CD8-positive, alpha-beta memory T cell (primary cell): ENCODE measurements at regions of chr4 and their contacts with region 1.

Region 1: DNA sequence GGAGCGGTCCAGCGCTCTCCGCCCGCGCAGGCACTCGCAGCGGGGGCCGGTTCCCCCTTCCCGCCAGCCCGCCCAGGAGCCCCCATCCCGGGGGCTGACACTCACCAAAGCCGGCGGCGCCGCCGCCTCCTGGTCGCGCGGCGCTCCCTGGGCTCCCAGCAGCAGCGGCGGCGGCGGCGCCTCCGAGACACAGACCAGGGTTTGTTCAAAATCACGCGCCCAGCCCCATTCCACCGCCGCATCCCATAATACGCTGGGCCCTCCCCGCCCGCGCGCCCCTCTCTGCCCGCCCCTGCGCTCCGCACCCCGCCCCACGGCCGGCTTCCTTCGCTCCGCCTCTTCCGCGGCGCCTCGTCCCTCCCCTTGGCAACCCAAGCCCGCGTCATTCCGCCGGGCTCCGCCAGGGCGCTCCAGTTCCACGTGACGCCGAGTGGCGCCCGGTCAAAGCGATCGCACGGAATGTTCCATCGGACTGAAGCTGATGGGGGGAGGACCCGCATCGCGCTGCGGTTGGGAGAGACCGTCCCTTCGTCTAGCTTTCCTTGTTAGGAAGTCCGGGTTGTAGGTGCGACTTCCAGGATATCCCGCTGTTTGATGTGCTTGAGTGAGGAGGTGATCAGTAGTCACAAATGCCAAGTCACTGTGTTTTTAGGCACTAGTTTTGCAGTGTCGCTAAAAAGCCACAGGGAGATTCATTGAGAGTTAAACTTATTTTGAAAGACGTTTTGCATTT is 2.2 kb upstream of the LIN54 start:
- DNase-seq: peak; percentile 95 to 97 (median 96)
- H3K4me3 ChIP-seq: peak overlapping the region; percentile 81
- H3K4me3 Mint-ChIP-seq: peak overlapping the region; percentile 89 to 97 (median 92)
- H3K27ac ChIP-seq: peak overlapping the region; percentile 72
- H3K27ac Mint-ChIP-seq: peak overlapping the region; percentile 84 to 96 (median 94)
- H3K4me1 ChIP-seq: peaks cover 41% of the 10 kb centered on the region
- H3K4me1 Mint-ChIP-seq: peaks cover 47 to 52% (median 50%) of the 10 kb centered on the region in 3 donors
- H3K27me3 ChIP-seq: no peaks in the 10 kb centered on the region
- H3K27me3 Mint-ChIP-seq: no peaks in the 10 kb centered on the region

Region 2: DNA sequence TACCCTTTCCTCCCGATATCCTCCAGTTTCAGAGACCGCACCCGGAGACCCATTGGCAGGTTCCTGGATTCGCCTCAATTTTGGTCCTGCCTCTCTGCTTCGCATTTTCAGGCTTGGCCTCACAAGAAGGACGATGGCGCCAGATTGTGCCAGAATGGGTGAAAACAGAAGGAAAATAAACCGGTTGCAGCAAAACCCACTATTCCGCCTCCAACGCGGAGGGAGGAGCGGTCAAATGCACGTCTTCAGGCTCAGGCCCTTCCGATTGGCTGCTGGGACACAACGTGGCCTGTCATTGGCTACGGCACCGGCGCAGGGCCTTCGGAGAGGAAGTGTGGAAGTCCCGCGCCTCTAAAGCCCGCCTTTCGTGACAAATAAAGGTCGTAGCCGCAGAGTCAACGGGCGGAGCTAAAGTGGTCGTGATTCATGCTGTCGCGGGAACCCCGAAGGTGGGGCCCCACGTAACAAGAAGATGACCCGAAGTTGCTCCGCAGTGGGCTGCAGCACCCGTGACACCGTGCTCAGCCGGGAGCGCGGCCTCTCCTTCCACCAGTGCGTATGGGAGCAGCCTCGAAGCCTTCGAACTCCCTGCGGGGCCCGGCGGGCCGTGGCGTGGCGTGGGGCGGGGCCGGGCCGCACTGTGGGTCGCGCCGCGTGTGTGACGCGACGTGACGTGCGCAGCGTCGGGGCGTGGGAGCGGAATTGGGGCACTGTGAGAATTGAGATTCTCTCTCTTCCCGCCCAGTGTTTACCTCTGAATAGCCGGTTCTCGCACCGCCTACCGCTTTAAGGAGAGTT is 112.3 kb before region 1 on chr4 and contains the start of gene THAP9:
- CTCF ChIA-PET with region 1: interaction called, 10 read pairs
- POLR2A ChIA-PET with region 1: interaction called, 6 read pairs
- DNase-seq: peak; percentile 96 to 99 (median 98)
- H3K4me3 ChIP-seq: peak within 1 kb of the TSS; percentile 97
- H3K4me3 Mint-ChIP-seq: no peak within 1 kb of the TSS
- H3K27ac ChIP-seq: peak within 1 kb of the TSS; percentile 98
- H3K27ac Mint-ChIP-seq: no peak within 1 kb of the TSS
- H3K4me1 ChIP-seq: peaks cover 34% of the 10 kb centered on the region
- H3K4me1 Mint-ChIP-seq: peaks cover 17 to 30% (median 18%) of the 10 kb centered on the region in 3 donors
- H3K27me3 ChIP-seq: no peaks in the 10 kb centered on the region
- H3K27me3 Mint-ChIP-seq: no peaks in the 10 kb centered on the region
- total RNA-seq, gene THAP9: 1.6 to 2.3 TPM

Region 3: GRCh38 chr4:82930848-82931755 is 81.8 kb before region 1 on chr4:
- CTCF ChIA-PET with region 1: no interaction called
- POLR2A ChIA-PET with region 1: no interaction called
- DNase-seq: no peak
- H3K4me3 ChIP-seq: no peak overlapping the region
- H3K4me3 Mint-ChIP-seq: no peak overlapping the region
- H3K27ac ChIP-seq: no peak overlapping the region
- H3K27ac Mint-ChIP-seq: peak overlapping the region in 1 of 8 donors; percentile 74
- H3K4me1 ChIP-seq: no peaks in the 10 kb centered on the region
- H3K4me1 Mint-ChIP-seq: no peaks in the 10 kb centered on the region
- H3K27me3 ChIP-seq: no peaks in the 10 kb centered on the region
- H3K27me3 Mint-ChIP-seq: no peaks in the 10 kb centered on the region

Region 4: DNA sequence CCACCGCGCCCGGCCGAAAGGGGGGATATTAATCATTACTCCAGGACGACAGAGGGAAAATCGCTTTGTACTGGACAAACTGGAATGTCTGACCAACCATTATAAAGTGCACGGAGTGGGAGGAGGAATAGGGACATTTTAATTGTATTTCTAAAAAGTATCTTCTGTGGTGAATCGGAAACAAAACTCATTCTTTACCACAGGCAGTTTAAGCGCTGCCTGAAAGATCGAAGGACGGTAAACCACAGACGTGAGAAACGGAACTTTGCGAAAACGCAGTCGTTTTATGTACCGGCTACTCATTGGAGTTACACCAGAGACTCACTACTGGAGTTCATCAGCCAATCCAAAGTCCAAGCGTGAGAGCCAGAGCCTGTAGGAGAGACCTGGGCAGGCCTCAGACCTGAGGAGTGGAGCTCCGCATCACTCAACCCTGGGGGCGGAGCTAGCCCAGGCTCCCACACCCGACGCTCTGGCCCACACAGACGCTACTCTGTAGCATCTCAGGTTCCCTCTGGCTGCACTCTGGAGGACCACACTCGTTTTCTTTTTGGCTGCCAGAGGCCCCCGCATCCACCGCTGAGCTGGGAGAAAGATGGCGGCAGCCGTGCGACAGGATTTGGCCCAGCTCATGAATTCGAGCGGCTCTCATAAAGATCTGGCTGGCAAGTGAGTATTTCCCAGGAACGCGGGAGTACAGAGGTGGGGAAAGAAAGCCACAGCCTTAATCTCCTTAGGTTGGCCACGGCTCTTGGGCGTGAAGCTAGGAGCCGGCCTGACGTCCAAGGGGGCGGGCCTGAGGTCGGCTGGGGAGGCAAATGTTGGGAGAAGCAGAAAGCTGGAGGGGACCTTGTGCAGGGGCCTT is 22.0 kb after region 1 on chr4 and contains the start of gene COPS4:
- CTCF ChIA-PET with region 1: interaction called, 25 read pairs
- POLR2A ChIA-PET with region 1: interaction called, 46 read pairs
- DNase-seq: peak; percentile 92 to 98 (median 94)
- H3K4me3 ChIP-seq: peak within 1 kb of the TSS; percentile 63
- H3K4me3 Mint-ChIP-seq: peak within 1 kb of the TSS; percentile 92 to 100 (median 99)
- H3K27ac ChIP-seq: peak within 1 kb of the TSS; percentile 74
- H3K27ac Mint-ChIP-seq: peak within 1 kb of the TSS; percentile 89 to 99 (median 98)
- H3K4me1 ChIP-seq: peaks cover 18% of the 10 kb centered on the region
- H3K4me1 Mint-ChIP-seq: peaks cover 35 to 48% (median 44%) of the 10 kb centered on the region in 3 donors
- H3K27me3 ChIP-seq: no peaks in the 10 kb centered on the region
- H3K27me3 Mint-ChIP-seq: no peaks in the 10 kb centered on the region
- total RNA-seq, gene COPS4: 38.4 to 38.5 TPM